Activated CD4-positive, alpha-beta T cell treated with anti-CD3 and anti-CD28 coated beads, Interleukin-2, amount 10 ng/mL, durations not matched to agents 24 days and 14 days (primary cell): ENCODE measurements at regions of chr1 and their contacts with region 1.

Region 1: GRCh38 chr1:150629115-150629928 is at the start of gene ENSA:
- DNase-seq: peak; percentile 98
- H3K4me3 Mint-ChIP-seq: no peak within 1 kb of the TSS
- H3K27ac Mint-ChIP-seq: no peak within 1 kb of the TSS
- H3K4me1 Mint-ChIP-seq: peaks cover 26% of the 10 kb centered on the region
- H3K27me3 Mint-ChIP-seq: no peaks in the 10 kb centered on the region
- total RNA-seq, gene ENSA: 244 and 248 TPM in 2 replicates

Region 2: GRCh38 chr1:150268705-150269403 is 360.5 kb before region 1 on chr1 and contains the start of gene APH1A:
- intact Hi-C with region 1: loop called (anchors 2 kb)
- DNase-seq: peak; percentile 98
- H3K4me3 Mint-ChIP-seq: peak within 1 kb of the TSS; percentile 98
- H3K27ac Mint-ChIP-seq: peak within 1 kb of the TSS; percentile 96
- H3K4me1 Mint-ChIP-seq: peaks cover 31% of the 10 kb centered on the region
- H3K27me3 Mint-ChIP-seq: no peaks in the 10 kb centered on the region
- total RNA-seq, gene APH1A: 101 and 105 TPM in 2 replicates

Region 3: DNA sequence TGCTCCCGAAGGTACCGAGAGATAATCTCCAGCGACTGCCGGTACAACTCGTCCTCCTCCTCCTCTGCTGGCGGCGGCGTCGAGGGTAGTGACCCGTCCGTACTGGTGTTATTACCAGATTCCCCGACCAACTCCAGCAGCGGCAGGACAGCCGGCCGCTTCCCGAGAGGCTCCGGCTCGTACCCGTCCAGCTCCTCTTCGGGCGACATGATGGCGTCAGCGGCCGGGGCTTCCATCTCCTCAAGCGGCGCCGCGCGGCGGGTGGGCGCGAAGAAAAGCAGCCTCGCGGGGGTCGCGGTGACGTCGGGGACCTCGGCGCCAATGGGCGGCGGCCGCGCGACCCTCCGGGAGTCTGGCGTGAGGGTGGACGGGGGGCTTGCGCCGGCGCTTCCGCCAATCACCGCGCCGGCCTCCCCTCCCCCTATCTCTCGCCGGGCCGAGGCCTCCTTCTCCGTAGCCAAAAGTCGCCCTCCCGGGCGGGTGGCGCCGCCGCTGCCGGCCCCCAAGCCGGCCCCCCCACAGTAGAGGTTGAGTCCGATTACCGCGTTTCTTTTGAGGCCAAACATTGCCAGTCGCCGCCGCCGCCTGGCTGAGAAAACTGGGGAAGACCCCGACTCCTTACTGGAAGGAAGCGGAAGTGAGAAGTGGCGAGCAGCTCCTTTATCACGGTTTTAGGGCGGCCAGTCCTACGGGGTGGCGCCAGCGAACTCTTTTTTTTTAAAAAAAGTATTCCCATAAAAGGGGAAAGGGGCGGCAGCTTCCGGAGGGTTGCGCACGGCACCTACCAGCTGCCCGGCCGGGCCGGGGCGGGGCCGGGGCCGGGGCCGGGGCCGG is 50.1 kb before region 1 on chr1 and contains the start of gene MCL1:
- intact Hi-C with region 1: loop called (anchors 2 kb)
- DNase-seq: peak; percentile 98
- H3K4me3 Mint-ChIP-seq: peak within 1 kb of the TSS; percentile 94
- H3K27ac Mint-ChIP-seq: peak within 1 kb of the TSS; percentile 93
- H3K4me1 Mint-ChIP-seq: peaks cover 26% of the 10 kb centered on the region
- H3K27me3 Mint-ChIP-seq: no peaks in the 10 kb centered on the region
- total RNA-seq, gene MCL1: 278 and 280 TPM in 2 replicates

Region 4: DNA sequence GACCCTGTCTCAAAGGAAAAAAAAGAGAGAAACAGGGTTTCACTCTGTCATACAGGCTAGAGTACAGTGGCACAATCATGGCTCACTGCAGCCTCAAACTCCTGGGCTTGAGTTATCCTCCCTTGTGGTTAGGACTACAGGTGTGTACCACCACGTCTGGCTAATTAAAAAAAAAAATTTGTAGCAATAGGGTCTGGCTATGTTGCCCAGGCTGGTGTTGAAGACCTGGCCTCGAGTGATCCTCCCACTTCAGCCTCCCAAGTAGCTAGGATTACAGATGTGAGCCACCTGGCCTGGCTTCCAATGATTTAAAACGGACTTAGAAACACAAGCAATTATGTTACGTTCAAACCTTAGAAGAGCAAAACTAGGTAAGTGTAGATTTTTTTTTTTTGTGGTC is 45.6 kb after region 1 on chr1:
- intact Hi-C with region 1: no loop called
- DNase-seq: no peak
- H3K4me3 Mint-ChIP-seq: no peak overlapping the region
- H3K27ac Mint-ChIP-seq: no peak overlapping the region
- H3K4me1 Mint-ChIP-seq: peaks cover 5% of the 10 kb centered on the region
- H3K27me3 Mint-ChIP-seq: no peaks in the 10 kb centered on the region

Region 5: GRCh38 chr1:150696590-150697524 is 67.5 kb after region 1 on chr1 and contains the start of gene GOLPH3L:
- intact Hi-C with region 1: loop called (anchors 1 kb)
- DNase-seq: peak; percentile 97
- H3K4me3 Mint-ChIP-seq: peak within 1 kb of the TSS; percentile 90
- H3K27ac Mint-ChIP-seq: peak within 1 kb of the TSS; percentile 92
- H3K4me1 Mint-ChIP-seq: peaks cover 19% of the 10 kb centered on the region
- H3K27me3 Mint-ChIP-seq: peaks cover 11% of the 10 kb centered on the region
- total RNA-seq, gene GOLPH3L: 19.6 and 19.8 TPM in 2 replicates

Region 6: GRCh38 chr1:150778409-150778808 is 149.1 kb after region 1 on chr1:
- intact Hi-C with region 1: no loop called
- DNase-seq: no peak
- H3K4me3 Mint-ChIP-seq: no peak overlapping the region
- H3K27ac Mint-ChIP-seq: no peak overlapping the region
- H3K4me1 Mint-ChIP-seq: peaks cover 10% of the 10 kb centered on the region
- H3K27me3 Mint-ChIP-seq: no peaks in the 10 kb centered on the region

Region 7: GRCh38 chr1:150925816-150926741 is 296.8 kb after region 1 on chr1 and contains the start of gene SETDB1:
- intact Hi-C with region 1: loop called (anchors 2 kb)
- DNase-seq: peak; percentile 97
- H3K4me3 Mint-ChIP-seq: peak within 1 kb of the TSS; percentile 93
- H3K27ac Mint-ChIP-seq: peak within 1 kb of the TSS; percentile 97
- H3K4me1 Mint-ChIP-seq: peaks cover 28% of the 10 kb centered on the region
- H3K27me3 Mint-ChIP-seq: no peaks in the 10 kb centered on the region
- total RNA-seq, gene SETDB1: 56.2 and 62.3 TPM in 2 replicates

Region 8: GRCh38 chr1:151281969-151282882 is 652.9 kb after region 1 on chr1 and contains the start of gene ZNF687:
- intact Hi-C with region 1: loop called (anchors 5 kb)
- DNase-seq: peak; percentile 99
- H3K4me3 Mint-ChIP-seq: peak within 1 kb of the TSS; percentile 99
- H3K27ac Mint-ChIP-seq: peak within 1 kb of the TSS; percentile 100
- H3K4me1 Mint-ChIP-seq: peaks cover 26% of the 10 kb centered on the region
- H3K27me3 Mint-ChIP-seq: no peaks in the 10 kb centered on the region
- total RNA-seq, gene ZNF687: 25.4 and 26.8 TPM in 2 replicates